Left colon (tissue), 2 donors: ENCODE measurements at regions of chrX and their contacts with region 1.

Region 1: DNA sequence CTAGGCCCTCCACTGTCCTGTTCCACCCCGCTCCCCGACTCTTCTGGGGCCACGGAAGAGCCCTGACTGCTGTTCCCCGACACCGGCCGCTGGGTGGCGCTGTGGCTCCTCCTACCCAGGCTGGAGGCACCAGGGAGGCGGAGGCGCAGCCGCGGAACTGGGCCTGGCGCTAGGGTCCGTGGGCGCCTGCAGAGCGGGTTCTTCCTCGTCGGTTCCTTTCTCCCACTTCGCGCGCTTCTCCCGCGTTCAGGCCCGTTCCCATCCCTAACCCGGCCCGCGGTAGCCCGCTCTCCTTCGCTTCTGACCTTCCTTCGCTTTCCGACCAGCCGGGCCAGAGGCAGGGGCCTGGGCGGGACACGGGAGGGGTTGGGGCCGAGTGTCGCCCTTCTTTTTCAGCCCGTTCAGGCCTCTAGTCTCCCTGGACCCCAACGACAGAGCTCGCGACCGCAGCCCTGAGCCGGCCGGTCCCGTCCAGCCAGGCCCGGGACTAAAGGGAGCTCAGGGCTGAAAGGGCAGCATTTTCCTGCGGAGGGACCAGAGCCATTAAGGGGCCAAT is 34.3 kb downstream of the NALF2 start:
- DNase-seq: peak; percentile 39 to 74
- ATAC-seq: peak; percentile 96

Region 2: GRCh38 chrX:69615779-69616456 is 77.5 kb after region 1 on chrX and contains the start of gene EDA:
- intact Hi-C with region 1: loop called in 1 of 2 experiments (anchors 5 kb)
- DNase-seq: peak; percentile 81 to 83
- ATAC-seq: peak; percentile 98
- total RNA-seq, gene EDA: 2.3 TPM

Region 3: GRCh38 chrX:70096052-70096451 is 557.7 kb after region 1 on chrX:
- intact Hi-C with region 1: loop called (anchors 10 kb)
- DNase-seq: no peak
- ATAC-seq: no peak

Region 4: GRCh38 chrX:70105229-70105628 is 566.8 kb after region 1 on chrX:
- intact Hi-C with region 1: loop called in 1 of 2 experiments (anchors 10 kb)
- DNase-seq: no peak
- ATAC-seq: no peak